Natural killer cell (primary cell): ENCODE measurements at regions of chr12 and their contacts with region 1.

Region 1: DNA sequence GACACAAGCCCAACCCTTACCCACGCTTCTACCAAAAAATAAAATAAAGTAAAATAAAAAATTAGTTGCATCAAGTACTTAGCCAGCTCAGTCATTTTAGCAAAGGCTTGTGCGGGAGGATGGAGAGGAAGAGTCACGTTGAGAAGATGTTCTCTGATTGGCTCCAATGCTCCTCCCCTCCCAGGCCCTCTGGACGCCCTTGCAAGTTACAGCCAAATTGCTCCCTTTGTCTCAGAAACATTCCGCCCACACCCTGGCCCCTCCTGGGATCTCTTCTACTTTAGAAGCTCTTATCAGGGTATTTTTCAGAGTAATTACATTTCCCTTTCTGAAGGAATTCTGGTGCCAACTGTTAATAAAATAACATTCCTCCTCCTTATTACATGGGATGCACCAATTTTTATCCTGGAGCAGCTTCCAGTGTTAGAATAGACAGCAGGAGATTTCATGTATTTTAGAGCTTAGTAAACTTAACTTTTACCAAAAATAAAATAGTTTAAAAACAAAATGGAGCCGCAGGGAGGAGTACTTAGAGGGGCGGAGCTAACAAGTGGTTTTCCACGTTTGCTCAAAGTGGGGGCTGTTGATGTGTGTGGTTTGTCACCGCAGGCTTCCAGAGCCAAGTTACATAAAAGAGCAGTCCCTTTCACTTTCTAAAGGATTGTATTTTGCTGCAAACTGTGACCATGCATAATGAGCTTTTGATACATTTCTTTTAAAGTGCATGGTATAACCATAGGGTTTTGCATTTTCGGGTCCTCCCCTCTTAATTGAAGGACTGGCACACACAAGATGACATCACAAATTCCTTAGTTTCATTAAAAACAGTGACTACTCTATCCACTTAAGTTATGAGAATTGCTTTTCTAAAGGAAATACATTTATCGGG is 71.7 kb upstream of the RAP1B start:
- DNase-seq: peak; percentile 57 to 87
- ATAC-seq: peak; percentile 85 to 94 (median 89)
- H3K4me3 ChIP-seq: peak overlapping the region; percentile 6
- H3K4me3 Mint-ChIP-seq: peak overlapping the region; percentile 83
- H3K27ac ChIP-seq: peak overlapping the region; percentile 76
- H3K27ac Mint-ChIP-seq: peak overlapping the region; percentile 75 to 80
- H3K4me1 ChIP-seq: peaks cover 50% of the 10 kb centered on the region
- H3K4me1 Mint-ChIP-seq: peaks cover 43 to 59% of the 10 kb centered on the region in 2 donors
- H3K27me3 ChIP-seq: no peaks in the 10 kb centered on the region
- H3K27me3 Mint-ChIP-seq: no peaks in the 10 kb centered on the region
- CTCF ChIP-seq: no peak

Region 2: GRCh38 chr12:68364893-68365725 is 173.9 kb before region 1 on chr12:
- intact Hi-C with region 1: loop called (anchors 1 kb)
- DNase-seq: peak; percentile 82 to 93
- ATAC-seq: peak; percentile 72 to 88 (median 79)
- H3K4me3 ChIP-seq: peak overlapping the region; percentile 21
- H3K4me3 Mint-ChIP-seq: peak overlapping the region; percentile 83
- H3K27ac ChIP-seq: peak overlapping the region; percentile 93
- H3K27ac Mint-ChIP-seq: peak overlapping the region; percentile 91
- H3K4me1 ChIP-seq: peaks cover 59% of the 10 kb centered on the region
- H3K4me1 Mint-ChIP-seq: peaks cover 73 to 75% of the 10 kb centered on the region in 2 donors
- H3K27me3 ChIP-seq: no peaks in the 10 kb centered on the region
- H3K27me3 Mint-ChIP-seq: no peaks in the 10 kb centered on the region
- CTCF ChIP-seq: no peak

Region 3: GRCh38 chr12:68482660-68483059 is 56.3 kb before region 1 on chr12:
- intact Hi-C with region 1: loop called (anchors 5 kb)
- DNase-seq: peak; percentile 36 to 53
- ATAC-seq: peak; percentile 80 to 94 (median 85)
- H3K4me3 ChIP-seq: no peak overlapping the region
- H3K4me3 Mint-ChIP-seq: peak overlapping the region; percentile 61
- H3K27ac ChIP-seq: peak overlapping the region; percentile 76
- H3K27ac Mint-ChIP-seq: peak overlapping the region; percentile 87 to 89
- H3K4me1 ChIP-seq: peaks cover 13% of the 10 kb centered on the region
- H3K4me1 Mint-ChIP-seq: peaks cover 35% of the 10 kb centered on the region in 2 donors
- H3K27me3 ChIP-seq: no peaks in the 10 kb centered on the region
- H3K27me3 Mint-ChIP-seq: no peaks in the 10 kb centered on the region
- CTCF ChIP-seq: no peak

Region 4: DNA sequence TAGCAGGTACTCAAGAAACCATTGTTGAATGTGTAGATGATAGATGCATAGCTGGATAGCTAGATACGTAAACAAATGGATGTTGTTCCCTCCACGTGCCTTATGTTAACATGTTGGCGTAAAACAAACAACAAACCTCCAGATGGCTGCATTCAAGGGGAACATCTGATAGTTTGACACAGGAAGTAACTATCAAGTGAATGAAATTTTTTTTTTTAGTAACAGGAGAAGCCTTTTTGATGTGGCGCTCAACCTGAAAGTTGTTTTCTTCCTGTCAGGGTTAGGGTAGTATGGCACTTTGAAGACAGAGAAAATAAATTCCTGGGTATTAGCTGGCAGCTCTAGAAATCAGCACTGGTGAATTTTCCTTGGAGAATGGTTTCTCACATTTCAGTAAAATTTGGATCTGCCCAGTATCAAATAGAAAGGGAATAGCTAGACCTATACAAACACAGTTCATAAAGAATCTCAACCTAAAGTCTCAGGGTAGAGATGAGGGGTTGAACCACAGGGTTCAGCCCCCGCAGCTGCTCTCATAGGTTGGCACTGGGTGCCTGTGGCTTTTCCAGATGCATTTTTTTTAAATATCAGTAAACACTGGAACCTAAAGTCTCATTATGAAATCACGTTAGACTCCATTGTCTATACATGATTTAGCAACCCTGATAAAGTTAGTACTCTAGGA is 52.9 kb after region 1 on chr12:
- intact Hi-C with region 1: loop called (anchors 5 kb)
- DNase-seq: peak in 1 of 2 donors; percentile 82
- ATAC-seq: peak; percentile 65 to 85 (median 66)
- H3K4me3 ChIP-seq: no peak overlapping the region
- H3K4me3 Mint-ChIP-seq: peak overlapping the region; percentile 39
- H3K27ac ChIP-seq: peak overlapping the region; percentile 56
- H3K27ac Mint-ChIP-seq: peak overlapping the region; percentile 84 to 87
- H3K4me1 ChIP-seq: peaks cover 35% of the 10 kb centered on the region
- H3K4me1 Mint-ChIP-seq: peaks cover 33 to 44% of the 10 kb centered on the region in 2 donors
- H3K27me3 ChIP-seq: no peaks in the 10 kb centered on the region
- H3K27me3 Mint-ChIP-seq: no peaks in the 10 kb centered on the region
- CTCF ChIP-seq: no peak

Region 5: GRCh38 chr12:68686595-68687521 is 147.9 kb after region 1 on chr12 and contains the start of gene NUP107:
- intact Hi-C with region 1: loop called (anchors 2 kb)
- DNase-seq: peak; percentile 95 to 100
- ATAC-seq: peak; percentile 96 to 98 (median 98)
- H3K4me3 ChIP-seq: peak within 1 kb of the TSS; percentile 83
- H3K4me3 Mint-ChIP-seq: peak within 1 kb of the TSS; percentile 97
- H3K27ac ChIP-seq: peak within 1 kb of the TSS; percentile 76
- H3K27ac Mint-ChIP-seq: peak within 1 kb of the TSS; percentile 96 to 98
- H3K4me1 ChIP-seq: peaks cover 2% of the 10 kb centered on the region
- H3K4me1 Mint-ChIP-seq: peaks cover 24 to 31% of the 10 kb centered on the region in 2 donors
- H3K27me3 ChIP-seq: no peaks in the 10 kb centered on the region
- H3K27me3 Mint-ChIP-seq: no peaks in the 10 kb centered on the region
- CTCF ChIP-seq: no peak
- total RNA-seq, gene NUP107: 54.9 to 69.2 (median 62.0) TPM